SK-N-SH (cell line): ENCODE measurements at regions of chr9 and their contacts with region 1.

Region 1: DNA sequence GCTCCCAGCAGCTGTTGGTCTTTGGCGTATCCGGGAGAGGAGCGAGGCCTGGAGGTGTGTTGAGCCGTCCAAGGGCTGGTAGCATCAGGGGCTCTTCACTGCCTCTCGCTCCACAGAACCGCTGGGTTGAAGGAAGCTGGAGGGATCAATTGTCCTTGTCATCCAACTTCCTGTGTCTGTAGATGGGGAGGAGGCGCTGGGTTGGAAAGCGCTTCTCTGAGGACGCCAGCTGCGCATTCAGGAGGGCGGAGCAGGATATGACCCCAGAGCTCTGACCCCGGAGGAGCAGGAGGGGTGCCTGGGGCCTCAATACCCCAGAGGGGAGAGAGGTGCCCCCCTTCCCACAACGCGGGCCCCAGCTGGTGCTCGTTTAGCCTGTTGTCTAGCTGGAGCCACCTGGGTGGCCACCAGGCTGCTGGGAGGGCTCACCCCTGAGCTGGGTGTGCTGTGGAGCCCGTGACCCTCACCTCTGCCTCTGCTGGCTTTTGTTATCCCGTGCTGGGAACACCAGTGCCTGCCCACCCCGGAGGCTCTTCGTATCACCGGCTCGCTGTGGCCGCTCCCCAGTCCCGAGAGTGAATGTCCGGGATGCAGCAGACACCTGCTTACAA is 2.0 kb upstream of the DBH start:
- DNase-seq: no peak
- H3K4me3 ChIP-seq: no peak overlapping the region
- H3K27ac ChIP-seq: peak overlapping the region in 1 of 2 experiments; percentile 100; a peak in 2 of 4 replicates
- H3K4me1 ChIP-seq: peaks cover 0 to 69% of the 10 kb centered on the region in 2 experiments; a peak in 2 of 4 replicates
- H3K27me3 ChIP-seq: peaks cover 37% of the 10 kb centered on the region
- CTCF ChIP-seq: no peak
- EP300 ChIP-seq: no peak
- RAD21 ChIP-seq: no peak

Region 2: GRCh38 chr9:133572821-133573361 is 61.3 kb before region 1 on chr9:
- CTCF ChIA-PET with region 1: interaction called, 4 read pairs
- POLR2A ChIA-PET with region 1: interaction called, 41 read pairs
- DNase-seq: peak; percentile 86
- H3K4me3 ChIP-seq: no peak overlapping the region
- H3K27ac ChIP-seq: peak overlapping the region in 1 of 2 experiments; percentile 97; a peak in 2 of 4 replicates
- H3K4me1 ChIP-seq: peaks cover 0 to 81% of the 10 kb centered on the region in 2 experiments; a peak in 2 of 4 replicates
- H3K27me3 ChIP-seq: no peaks in the 10 kb centered on the region
- CTCF ChIP-seq: no peak
- EP300 ChIP-seq: no peak
- RAD21 ChIP-seq: peak; percentile 59

Region 3: GRCh38 chr9:133589454-133590227 is 44.5 kb before region 1 on chr9:
- CTCF ChIA-PET with region 1: interaction called, 11 read pairs
- POLR2A ChIA-PET with region 1: interaction called, 94 read pairs
- DNase-seq: no peak
- H3K4me3 ChIP-seq: no peak overlapping the region
- H3K27ac ChIP-seq: peak overlapping the region in 1 of 2 experiments; percentile 39; a peak in 1 of 4 replicates
- H3K4me1 ChIP-seq: peaks cover 0 to 69% of the 10 kb centered on the region in 2 experiments; a peak in 3 of 4 replicates
- H3K27me3 ChIP-seq: peaks cover 19% of the 10 kb centered on the region
- CTCF ChIP-seq: peak; percentile 49
- EP300 ChIP-seq: no peak
- RAD21 ChIP-seq: no peak

Region 4: DNA sequence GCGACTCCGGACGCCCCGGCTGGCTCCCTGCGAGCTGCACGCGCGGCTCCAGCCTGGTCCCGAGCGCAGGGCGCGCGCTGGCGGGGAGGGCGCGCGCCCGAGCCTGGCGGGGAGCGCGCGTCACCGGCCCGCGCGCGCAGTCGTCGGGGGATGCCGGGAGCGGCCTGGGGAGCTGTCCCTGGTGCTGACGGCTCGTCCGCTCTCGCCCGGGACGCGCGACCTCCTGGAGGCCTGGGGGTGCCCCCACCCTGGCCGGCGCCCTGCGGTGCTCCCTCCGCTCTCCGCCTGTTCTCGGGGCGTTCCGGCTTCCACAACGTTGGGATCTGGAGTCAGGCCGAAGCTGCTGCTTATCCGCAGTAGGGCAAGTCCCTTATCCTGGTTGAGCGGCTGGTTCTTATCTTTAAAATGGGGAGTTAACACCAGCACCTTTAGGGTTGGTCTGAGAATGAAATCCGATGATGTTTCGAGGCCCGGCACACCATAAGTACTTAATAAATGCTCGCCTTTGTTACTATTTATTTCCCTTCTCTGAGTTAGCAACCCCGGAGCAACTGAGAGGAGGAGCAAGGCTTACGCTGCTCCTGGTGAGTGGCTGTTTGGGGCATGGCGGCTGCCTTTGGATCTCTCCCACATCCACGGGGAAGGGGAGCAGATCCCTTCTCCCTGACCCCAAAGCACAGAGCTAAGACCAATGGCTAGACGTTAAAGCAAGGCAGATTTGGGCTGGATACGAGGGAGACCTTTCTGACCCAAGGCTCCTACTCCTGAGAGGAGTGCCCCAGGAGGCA is 24.7 kb before region 1 on chr9 and contains the start of gene FAM163B:
- CTCF ChIA-PET with region 1: interaction called, 12 read pairs
- POLR2A ChIA-PET with region 1: interaction called, 261 read pairs
- DNase-seq: peak; percentile 93
- H3K4me3 ChIP-seq: peak within 1 kb of the TSS in 1 of 2 experiments; percentile 46; a peak in 2 of 4 replicates
- H3K27ac ChIP-seq: peak within 1 kb of the TSS in 1 of 2 experiments; percentile 86; a peak in 2 of 4 replicates
- H3K4me1 ChIP-seq: peaks cover 0 to 71% of the 10 kb centered on the region in 2 experiments; a peak in 1 of 4 replicates
- H3K27me3 ChIP-seq: peaks cover 18% of the 10 kb centered on the region
- CTCF ChIP-seq: no peak
- EP300 ChIP-seq: no peak
- RAD21 ChIP-seq: no peak
- polyA plus RNA-seq, gene FAM163B: 0.05 and 0.15 TPM in 2 replicates

Region 5: DNA sequence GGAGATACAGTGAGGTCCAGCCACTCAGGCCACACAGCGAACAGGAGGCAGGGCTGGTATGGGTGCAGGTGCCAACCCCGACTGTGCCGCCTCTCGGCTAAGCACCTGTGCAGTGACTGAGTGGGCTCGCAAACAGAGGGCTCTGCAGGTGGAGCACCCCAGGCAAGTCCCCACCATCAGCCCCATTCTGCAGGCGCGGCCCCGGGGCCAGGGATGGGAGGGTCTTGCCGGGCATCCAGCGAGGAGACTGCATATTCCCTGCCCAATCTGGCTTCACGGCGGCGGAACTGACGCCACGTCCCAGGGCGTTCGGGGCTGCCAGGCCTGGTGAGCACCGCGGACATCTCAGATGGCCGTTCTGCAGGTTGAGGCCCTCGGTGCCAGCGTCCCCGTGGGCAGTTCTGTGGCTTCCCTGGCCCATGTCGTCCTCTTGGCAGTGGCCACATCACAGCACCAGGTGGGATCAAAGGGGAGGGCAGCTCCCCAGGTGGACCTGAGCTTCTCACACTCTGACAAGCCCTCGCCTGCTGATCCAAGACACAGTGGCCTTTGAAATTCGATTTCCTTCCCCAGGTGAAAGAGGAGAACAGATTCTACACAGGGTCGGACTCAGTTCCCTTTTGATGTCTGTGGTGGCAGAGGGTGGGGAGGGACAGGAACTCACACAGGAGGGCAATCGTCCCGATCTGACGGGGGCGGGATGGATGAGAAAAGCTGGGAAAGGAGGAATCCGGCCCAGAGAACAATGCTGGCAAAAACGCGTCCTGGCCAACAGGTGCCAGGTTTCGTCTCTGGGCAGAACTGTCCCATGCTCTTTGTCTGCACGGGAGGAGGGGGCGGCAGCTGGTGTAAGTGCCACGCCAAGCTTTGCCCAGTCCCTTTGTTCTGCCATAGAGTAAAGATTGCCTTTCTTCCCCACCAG is 20.8 kb after region 1 on chr9:
- CTCF ChIA-PET with region 1: interaction called, 3 read pairs
- POLR2A ChIA-PET with region 1: interaction called, 18 read pairs
- DNase-seq: no peak
- H3K4me3 ChIP-seq: no peak overlapping the region
- H3K27ac ChIP-seq: peak overlapping the region in 1 of 2 experiments; percentile 20; a peak in 1 of 4 replicates
- H3K4me1 ChIP-seq: peaks cover 0 to 58% of the 10 kb centered on the region in 2 experiments; a peak in 1 of 4 replicates
- H3K27me3 ChIP-seq: no peaks in the 10 kb centered on the region; the same call in 1 of the 2 replicates
- CTCF ChIP-seq: no peak
- EP300 ChIP-seq: no peak
- RAD21 ChIP-seq: no peak

Region 6: GRCh38 chr9:133683586-133684120 is 49.5 kb after region 1 on chr9:
- CTCF ChIA-PET with region 1: no interaction called
- POLR2A ChIA-PET with region 1: interaction called, 10 read pairs
- DNase-seq: peak; percentile 93
- H3K4me3 ChIP-seq: no peak overlapping the region
- H3K27ac ChIP-seq: peak overlapping the region in 1 of 2 experiments; percentile 97; a peak in 2 of 4 replicates
- H3K4me1 ChIP-seq: peaks cover 0 to 66% of the 10 kb centered on the region in 2 experiments; a peak in 2 of 4 replicates
- H3K27me3 ChIP-seq: no peaks in the 10 kb centered on the region
- CTCF ChIP-seq: no peak
- EP300 ChIP-seq: peak in 1 of 2 experiments; percentile 65; a peak in 2 of 4 replicates
- RAD21 ChIP-seq: no peak; the same call in 1 of the 2 replicates

Region 7: GRCh38 chr9:133855802-133856521 is 221.8 kb after region 1 on chr9:
- CTCF ChIA-PET with region 1: no interaction called
- POLR2A ChIA-PET with region 1: no interaction called
- DNase-seq: no peak
- H3K4me3 ChIP-seq: no peak overlapping the region
- H3K27ac ChIP-seq: no peak overlapping the region
- H3K4me1 ChIP-seq: peaks cover 0 to 11% of the 10 kb centered on the region in 2 experiments; a peak in 1 of 4 replicates
- H3K27me3 ChIP-seq: no peaks in the 10 kb centered on the region
- CTCF ChIP-seq: no peak
- EP300 ChIP-seq: no peak
- RAD21 ChIP-seq: no peak